ENCODE measurements at regions of chr15 and their contacts with region 1.

Region 1: DNA sequence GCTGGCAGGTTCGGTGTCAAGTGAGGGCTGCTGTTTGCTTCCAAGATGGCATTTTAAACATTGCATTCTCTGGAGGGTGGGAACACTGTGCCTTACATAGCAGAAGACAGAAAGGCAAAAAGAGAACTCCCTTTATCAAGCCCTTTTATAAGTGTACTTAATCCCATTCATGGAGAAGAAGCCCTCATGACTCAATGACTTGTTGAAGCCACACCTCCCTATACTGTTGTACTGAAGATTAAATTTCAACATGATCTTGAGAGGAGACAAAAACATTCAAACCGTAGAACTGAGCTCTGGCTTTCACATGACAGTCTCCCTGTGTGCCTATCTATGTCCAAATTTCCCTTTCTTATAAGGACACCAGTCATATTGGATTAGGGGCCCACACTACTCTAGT is 443.4 kb upstream of the CDIN1 start:
- DNase-seq: no peak
- ATAC-seq: no peak

Region 2: DNA sequence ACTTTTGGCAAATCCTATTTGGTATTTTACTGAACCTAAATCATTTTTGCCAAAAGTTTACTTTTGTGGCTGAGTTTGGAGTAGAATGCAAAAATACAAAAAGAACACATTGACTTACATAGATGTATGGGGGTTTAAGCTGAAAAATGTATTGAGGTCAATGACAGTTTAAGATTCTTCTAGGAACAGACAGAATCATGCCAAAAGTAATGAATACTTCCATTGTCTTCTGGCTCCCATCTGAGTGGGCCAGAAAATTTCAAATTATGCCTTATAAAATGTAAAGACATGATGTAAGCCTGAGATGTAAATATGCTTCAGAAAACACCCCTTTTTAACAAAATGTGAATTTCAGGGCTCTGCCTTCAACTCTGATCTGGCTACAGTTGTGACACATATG is 215.0 kb before region 1 on chr15:
- intact Hi-C with region 1: no loop called
- DNase-seq: no peak
- ATAC-seq: no peak

Region 3: GRCh38 chr15:36066757-36067156 is 69.3 kb before region 1 on chr15:
- intact Hi-C with region 1: loop called in 1 of 2 experiments (anchors 10 kb)
- DNase-seq: no peak
- ATAC-seq: peak in 1 of 2 donors; percentile 49

Measured in left cardiac atrium (tissue), 4 donors.